OCI-LY7 (cell line): ENCODE measurements at regions of chr20 and their contacts with region 1.

Region 1: DNA sequence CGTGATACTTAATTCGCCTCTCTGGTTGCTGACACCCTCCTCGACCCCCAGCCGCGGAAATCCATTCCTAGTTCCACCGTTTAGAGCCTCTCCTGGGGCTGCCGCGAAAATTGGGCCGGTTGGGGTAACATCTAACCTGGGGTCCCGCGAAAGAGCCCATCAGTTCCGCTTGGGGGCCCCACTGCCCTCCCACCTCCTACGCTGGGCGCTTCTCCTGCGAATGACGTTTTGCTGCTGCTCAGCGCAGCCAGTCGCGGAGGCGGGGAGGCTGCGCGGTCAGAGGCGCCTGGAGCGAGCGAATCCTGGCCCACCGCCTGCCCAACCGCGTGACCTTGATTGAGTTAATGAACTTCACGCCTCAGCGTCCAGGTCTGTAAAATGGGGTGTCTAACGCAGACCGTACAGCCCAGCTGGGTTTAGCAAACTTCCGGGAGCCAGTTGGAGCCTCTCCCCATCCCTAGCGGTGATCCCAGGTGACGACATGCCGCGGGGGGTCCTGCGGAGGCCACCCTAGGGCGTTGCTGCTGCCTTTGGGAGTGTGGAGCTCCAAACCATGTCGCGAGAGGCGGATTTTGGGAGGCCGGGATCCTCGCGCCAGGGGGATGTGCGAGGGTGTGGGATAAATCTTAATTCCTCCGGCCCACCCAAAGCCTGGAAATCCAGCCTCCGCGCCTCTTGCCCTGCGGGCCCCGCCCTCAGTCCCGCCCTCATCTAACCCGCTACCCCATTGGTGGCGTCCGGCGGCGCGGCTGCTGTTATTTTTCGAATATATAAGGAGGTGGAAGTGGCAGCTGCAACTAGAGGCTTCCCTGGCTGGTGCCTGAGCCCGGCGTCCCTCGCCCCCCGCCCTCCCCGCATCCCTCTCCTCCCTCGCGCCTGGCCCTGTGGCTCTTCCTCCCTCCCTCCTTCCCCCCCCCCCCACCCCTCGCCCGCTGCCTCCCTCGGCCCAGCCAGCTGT is at the start of gene CDC25B:
- DNase-seq: peak; percentile 94
- H3K4me3 ChIP-seq: peak within 1 kb of the TSS; percentile 91
- H3K27ac ChIP-seq: peak within 1 kb of the TSS; percentile 83
- H3K4me1 ChIP-seq: peaks cover 46% of the 10 kb centered on the region
- CTCF ChIP-seq: peak; percentile 54
- total RNA-seq, gene CDC25B: 86.1 and 89.2 TPM in 2 replicates

Region 2: DNA sequence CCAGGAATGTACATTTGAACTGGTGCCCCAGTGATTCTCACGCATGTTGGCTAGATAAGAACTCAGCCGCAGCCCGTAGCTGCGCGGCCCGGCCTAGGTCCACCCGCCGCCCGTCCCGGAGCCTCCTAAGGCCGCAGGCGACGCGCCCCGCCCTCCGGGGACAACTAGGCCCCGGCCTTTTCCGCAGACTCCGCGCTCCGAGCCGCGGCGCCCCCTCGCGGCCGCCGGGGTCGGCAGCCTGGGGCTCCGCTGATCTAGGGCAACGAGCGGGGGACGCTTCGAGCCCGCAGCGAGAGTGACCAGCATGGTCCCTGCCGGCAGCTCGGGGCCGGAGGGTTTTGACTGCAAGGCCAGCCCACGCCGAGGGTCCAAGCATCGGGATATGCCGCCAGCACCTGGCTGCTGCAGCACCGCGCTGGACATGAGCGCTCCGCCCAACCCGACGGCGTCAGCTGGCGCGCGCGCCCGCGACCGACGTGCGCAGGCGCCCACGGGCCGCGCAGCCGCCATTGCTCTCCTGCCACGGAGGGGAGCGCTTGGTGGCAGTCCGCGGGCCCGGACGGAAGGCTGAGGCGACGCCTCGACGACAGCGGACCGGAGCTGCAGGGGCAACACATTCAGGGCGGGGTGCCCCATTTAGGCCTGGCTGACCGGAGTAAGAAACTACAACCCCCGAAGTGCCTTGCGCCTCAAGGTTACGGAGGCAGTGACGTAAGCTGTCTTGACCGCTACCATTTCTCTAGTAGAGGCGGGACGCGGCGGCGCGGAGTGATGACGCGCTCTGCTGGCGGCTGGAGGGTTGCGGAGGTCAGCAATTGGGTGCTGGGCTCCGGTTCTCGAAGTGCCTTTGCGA is 24.5 kb after region 1 on chr20 and contains the start of gene AP5S1:
- CTCF ChIA-PET with region 1: interaction called, 9 read pairs
- POLR2A ChIA-PET with region 1: interaction called, 8 read pairs
- intact Hi-C with region 1: loop called (anchors 1 kb)
- DNase-seq: peak; percentile 97
- H3K4me3 ChIP-seq: peak within 1 kb of the TSS; percentile 91
- H3K27ac ChIP-seq: peak within 1 kb of the TSS; percentile 70
- H3K4me1 ChIP-seq: peaks cover 37% of the 10 kb centered on the region
- CTCF ChIP-seq: peak; percentile 98
- total RNA-seq, gene AP5S1: 6.2 and 9.8 TPM in 2 replicates